Mammary epithelial cell (primary cell): ENCODE measurements at regions of chr7 and their contacts with region 1.

Region 1: GRCh38 chr7:50534690-50535290 is 30.4 kb downstream of the DDC start:
- DNase-seq: peak; percentile 99
- H3K4me3 ChIP-seq: no peak overlapping the region
- H3K27ac ChIP-seq: peak overlapping the region; percentile 88
- H3K4me1 ChIP-seq: peaks cover 37% of the 10 kb centered on the region
- H3K27me3 ChIP-seq: no peaks in the 10 kb centered on the region
- CTCF ChIP-seq: peak in 1 of 2 donors; percentile 13

Region 2: DNA sequence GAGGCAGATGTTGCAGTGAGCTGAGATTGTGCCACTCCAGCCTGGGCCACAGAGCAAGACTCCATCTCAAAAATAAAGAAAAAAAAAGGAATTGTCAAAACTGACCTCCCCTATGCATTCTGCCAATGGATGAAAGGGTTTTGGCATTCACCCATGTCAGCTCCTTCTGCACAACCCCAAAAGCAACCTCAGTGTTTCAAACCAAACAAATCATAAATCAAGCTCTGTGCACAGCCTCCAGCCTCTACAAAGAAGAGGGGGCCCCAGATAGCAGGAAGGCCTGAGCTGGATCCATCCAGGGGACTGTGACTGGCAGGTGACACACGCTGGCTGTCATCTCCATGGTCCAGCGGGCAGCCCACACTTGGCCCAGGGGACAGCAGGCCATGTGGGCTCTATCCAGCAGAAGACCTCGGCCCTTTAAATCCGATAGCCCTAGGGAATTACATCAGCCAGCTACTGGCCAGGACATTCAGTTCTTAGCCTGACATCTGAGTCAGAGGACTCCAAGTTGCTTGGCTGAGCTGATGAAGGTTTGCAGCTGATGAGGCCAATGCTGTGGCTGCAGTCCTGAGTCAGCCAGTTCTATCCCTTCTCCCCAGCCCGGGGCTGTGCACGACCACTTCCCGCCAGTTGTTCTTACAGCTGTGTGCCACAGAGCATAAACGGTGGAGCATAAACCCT is 32.6 kb before region 1 on chr7:
- CTCF ChIA-PET with region 1: no interaction called
- dilution Hi-C with region 1: no loop called
- in situ Hi-C with region 1: no loop called
- intact Hi-C with region 1: loop called (anchors 1 kb)
- DNase-seq: peak; percentile 86
- H3K4me3 ChIP-seq: no peak overlapping the region
- H3K27ac ChIP-seq: peak overlapping the region; percentile 76
- H3K4me1 ChIP-seq: peaks cover 34% of the 10 kb centered on the region
- H3K27me3 ChIP-seq: no peaks in the 10 kb centered on the region
- CTCF ChIP-seq: no peak